ENCODE measurements at regions of chr4 and their contacts with region 1.

Region 1: DNA sequence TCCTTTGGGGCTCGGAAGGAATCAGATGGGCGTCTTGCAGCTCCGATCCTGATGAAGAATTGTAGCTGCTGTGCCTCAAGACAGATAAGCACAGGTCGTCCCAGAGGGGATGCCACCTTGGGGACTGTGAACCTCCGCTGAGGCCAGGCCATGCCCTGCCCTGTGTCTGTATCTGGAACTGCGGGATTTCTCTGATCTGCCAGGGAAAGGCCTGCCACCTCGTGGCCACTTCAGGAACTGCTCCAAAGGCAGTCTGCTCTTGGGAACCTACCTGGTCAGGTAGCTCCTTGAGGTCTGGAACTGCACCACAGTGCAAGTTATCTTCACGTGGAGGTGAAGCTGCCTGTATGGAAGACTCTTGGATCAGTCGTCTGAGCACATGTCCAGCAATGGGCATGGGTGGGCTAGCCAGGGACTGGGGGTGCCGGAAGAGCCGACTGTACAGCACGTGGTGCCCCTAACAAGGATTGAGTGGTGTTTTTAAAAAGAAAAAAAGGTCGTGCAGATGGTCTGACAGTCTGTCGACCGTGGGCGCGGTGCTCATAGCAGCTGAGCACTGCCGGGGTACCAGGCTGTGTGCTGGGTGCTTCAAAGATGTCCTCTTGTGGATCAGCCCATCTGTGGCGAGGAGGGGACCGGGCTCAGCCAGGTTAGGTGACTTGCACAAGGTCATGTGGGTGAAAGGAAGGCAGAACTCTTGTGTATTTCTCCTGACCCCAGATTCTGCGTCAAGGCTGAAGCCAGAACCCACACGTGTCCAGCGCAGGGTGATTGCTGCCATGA is 3.1 kb upstream of the GRPEL1 start:
- DNase-seq: peak; percentile 87 to 90 (median 89)
- H3K4me3 ChIP-seq: no peak overlapping the region
- H3K27ac ChIP-seq: no peak overlapping the region
- H3K4me1 ChIP-seq: peaks cover 4 to 19% (median 10%) of the 10 kb centered on the region in 3 donors
- H3K27me3 ChIP-seq: no peaks in the 10 kb centered on the region
- CTCF ChIP-seq: peak; percentile 100

Region 2: DNA sequence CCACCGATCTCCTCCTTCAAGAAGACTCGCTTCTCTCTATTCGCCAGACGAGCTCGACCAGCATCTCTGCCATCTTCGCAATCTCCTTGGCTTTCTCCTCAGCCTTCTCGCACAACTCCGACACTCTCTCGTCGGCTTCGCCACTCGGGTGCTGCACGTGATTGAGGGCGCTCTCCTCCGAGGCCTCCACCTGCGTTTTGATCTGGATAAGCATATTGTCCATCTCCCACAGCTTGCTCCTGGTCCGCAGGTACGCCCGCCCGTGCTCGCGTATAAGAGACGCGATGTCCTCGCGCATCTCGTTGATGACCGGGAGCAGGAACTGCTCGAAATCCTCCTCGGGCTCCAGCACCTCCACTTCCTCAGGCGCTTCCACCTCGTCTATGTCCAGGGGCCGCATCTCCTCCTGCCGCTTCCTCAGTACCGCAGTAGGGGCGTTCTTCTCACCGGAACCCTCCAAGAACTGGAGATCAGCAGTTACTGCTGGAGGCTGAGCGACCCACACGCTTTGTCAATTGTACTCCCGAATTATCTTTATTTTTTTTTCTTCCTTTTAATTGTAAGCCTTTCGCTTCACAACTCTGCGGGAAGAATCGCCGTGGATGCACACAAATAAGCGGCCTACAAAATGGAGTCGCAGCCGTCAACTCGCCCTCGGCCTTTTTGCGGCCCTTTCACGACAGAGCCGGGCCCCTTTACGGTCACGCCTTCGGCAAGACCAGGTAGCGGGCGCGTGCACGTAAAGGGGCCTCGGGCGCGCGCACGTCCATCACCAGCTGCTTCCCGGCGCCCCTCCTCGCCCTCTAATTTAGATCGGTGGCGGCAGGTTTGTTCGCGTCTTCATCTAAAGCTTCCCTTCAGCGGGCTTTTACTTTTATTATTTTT is 361.4 kb before region 1 on chr4 and contains the start of gene MRFAP1L1:
- intact Hi-C with region 1: loop called (anchors 10 kb)
- DNase-seq: peak; percentile 97 to 99 (median 98)
- H3K4me3 ChIP-seq: peak within 1 kb of the TSS; percentile 88 to 95 (median 93)
- H3K27ac ChIP-seq: peak within 1 kb of the TSS; percentile 82
- H3K4me1 ChIP-seq: peaks cover 0 to 10% (median 9%) of the 10 kb centered on the region in 3 donors
- H3K27me3 ChIP-seq: no peaks in the 10 kb centered on the region
- CTCF ChIP-seq: no peak
- total RNA-seq, gene MRFAP1L1: 57.1 TPM